H1 (cell line): ENCODE measurements at regions of chr20 and their contacts with region 1.

Region 1: DNA sequence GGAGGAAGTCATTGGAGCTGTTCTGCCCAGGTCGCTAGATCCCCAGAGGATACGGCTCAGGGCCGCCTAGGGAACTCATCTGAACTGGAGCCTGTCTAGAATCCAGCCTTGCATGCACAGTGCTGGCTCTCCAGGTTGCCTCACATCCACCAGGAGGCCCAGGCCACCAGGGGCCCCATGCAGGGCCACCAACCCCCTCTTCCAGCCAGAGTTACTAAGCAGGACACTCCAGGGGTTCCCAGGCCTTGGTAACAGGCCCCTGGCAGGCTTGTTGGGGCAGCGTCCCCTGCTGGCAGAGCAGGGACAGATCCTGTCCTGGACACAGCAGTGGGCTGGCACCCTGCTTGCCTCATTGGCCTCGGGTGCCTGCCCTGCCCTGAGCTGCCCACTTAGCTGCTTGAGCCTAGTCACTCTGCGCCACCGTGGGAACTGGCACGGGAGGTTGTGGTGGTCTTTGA is 35.3 kb downstream of the EFCAB8 start:
- DNase-seq: peak; percentile 41 to 85
- H3K4me3 ChIP-seq: no peak overlapping the region
- H3K27ac ChIP-seq: no peak overlapping the region
- H3K4me1 ChIP-seq: peaks cover 0 to 10% (median 4%) of the 10 kb centered on the region in 4 experiments; a peak in 5 of 7 replicates
- H3K27me3 ChIP-seq: no peaks in the 10 kb centered on the region
- CTCF ChIP-seq: peak; percentile 88 to 96 (median 94)
- EP300 ChIP-seq: no peak
- POLR2A ChIP-seq: no peak
- RAD21 ChIP-seq: peak; percentile 74 to 86

Region 2: DNA sequence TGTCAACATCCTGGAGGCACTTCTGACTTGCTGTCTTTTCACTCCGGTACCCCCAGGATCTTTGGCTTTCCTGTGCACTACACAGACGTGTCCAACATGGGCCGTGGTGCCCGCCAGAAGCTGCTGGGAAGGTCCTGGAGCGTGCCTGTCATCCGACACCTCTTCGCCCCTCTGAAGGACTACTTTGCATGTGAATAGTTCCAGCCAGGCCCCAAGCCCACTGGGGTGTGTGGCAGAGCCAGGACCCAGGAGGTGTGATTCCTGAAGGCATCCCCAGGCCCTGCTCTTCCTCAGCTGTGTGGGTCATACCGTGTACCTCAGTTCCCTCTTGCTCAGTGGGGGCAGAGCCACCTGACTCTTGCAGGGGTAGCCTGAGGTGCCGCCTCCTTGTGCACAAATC is 86.3 kb before region 1 on chr20:
- CTCF ChIA-PET with region 1: no interaction called
- POLR2A ChIA-PET with region 1: interaction called, 18 read pairs
- DNase-seq: peak in 1 of 2 experiments; percentile 73
- H3K4me3 ChIP-seq: no peak overlapping the region
- H3K27ac ChIP-seq: 0 out of 2 replicates have a peak overlapping the region, but pooled peaks have one; percentile 36
- H3K4me1 ChIP-seq: peaks cover 8 to 33% (median 25%) of the 10 kb centered on the region in 4 experiments
- H3K27me3 ChIP-seq: no peaks in the 10 kb centered on the region
- CTCF ChIP-seq: no peak
- EP300 ChIP-seq: no peak
- POLR2A ChIP-seq: peak in 1 of 2 experiments; percentile 44; a peak in 1 of 3 replicates
- RAD21 ChIP-seq: no peak

Region 3: GRCh38 chr20:32871627-32872160 is 22.4 kb before region 1 on chr20:
- CTCF ChIA-PET with region 1: interaction called, 11 read pairs
- POLR2A ChIA-PET with region 1: no interaction called
- DNase-seq: no peak
- H3K4me3 ChIP-seq: no peak overlapping the region
- H3K27ac ChIP-seq: no peak overlapping the region
- H3K4me1 ChIP-seq: no peaks in the 10 kb centered on the region; a peak in 2 of 7 replicates
- H3K27me3 ChIP-seq: no peaks in the 10 kb centered on the region
- CTCF ChIP-seq: no peak
- EP300 ChIP-seq: no peak
- POLR2A ChIP-seq: no peak
- RAD21 ChIP-seq: no peak

Region 4: GRCh38 chr20:32880635-32881034 is 13.4 kb before region 1 on chr20:
- CTCF ChIA-PET with region 1: interaction called, 14 read pairs
- POLR2A ChIA-PET with region 1: interaction called, 5 read pairs
- DNase-seq: no peak
- H3K4me3 ChIP-seq: no peak overlapping the region
- H3K27ac ChIP-seq: no peak overlapping the region
- H3K4me1 ChIP-seq: peaks cover 0 to 4% (median under 1%) of the 10 kb centered on the region in 4 experiments; a peak in 2 of 7 replicates
- H3K27me3 ChIP-seq: no peaks in the 10 kb centered on the region
- CTCF ChIP-seq: no peak
- EP300 ChIP-seq: no peak
- POLR2A ChIP-seq: no peak
- RAD21 ChIP-seq: no peak